ENCODE measurements at regions of chr7 and their contacts with region 1.

Region 1: GRCh38 chr7:74206589-74207120 is 3.2 kb upstream of the LAT2 start:
- DNase-seq: peak; percentile 57
- ATAC-seq: peak; percentile 90
- H3K4me3 ChIP-seq: no peak overlapping the region
- H3K27ac ChIP-seq: no peak overlapping the region
- H3K4me1 ChIP-seq: peaks cover 4% of the 10 kb centered on the region; the same call in 1 of the 2 replicates
- H3K27me3 ChIP-seq: no peaks in the 10 kb centered on the region
- CTCF ChIP-seq: peak; percentile 91
- POLR2A ChIP-seq: peak; percentile 46; the same call in 1 of the 2 replicates
- RAD21 ChIP-seq: peak; percentile 93

Region 2: DNA sequence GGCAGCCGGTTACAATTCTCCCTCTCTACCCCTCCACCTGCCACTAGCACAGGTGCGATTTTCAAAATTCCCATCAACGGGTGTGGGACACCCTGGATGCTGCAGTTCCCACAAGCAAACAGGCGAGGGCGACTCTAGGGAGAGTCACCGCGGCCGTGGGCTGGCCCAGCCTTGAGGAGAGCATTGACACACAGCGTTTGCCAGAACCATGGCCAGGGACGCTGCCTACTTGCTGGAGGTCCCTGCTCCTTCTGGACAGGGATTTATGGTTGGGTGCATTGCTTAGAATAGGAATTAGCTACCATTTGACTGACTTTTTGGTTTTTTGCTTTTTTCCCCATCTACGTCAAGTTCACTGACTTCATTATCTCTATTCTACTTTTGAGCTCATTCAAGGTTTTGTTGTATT is 394.9 kb before region 1 on chr7:
- CTCF ChIA-PET with region 1: no interaction called
- POLR2A ChIA-PET with region 1: no interaction called
- dilution Hi-C with region 1: no loop called
- in situ Hi-C with region 1: no loop called
- intact Hi-C with region 1: no loop called
- DNase-seq: peak; percentile 41
- ATAC-seq: peak; percentile 93
- H3K4me3 ChIP-seq: no peak overlapping the region
- H3K27ac ChIP-seq: no peak overlapping the region
- H3K4me1 ChIP-seq: 0 out of 2 replicates have a peak, but pooled peaks cover 2% of the 10 kb centered on the region
- H3K27me3 ChIP-seq: no peaks in the 10 kb centered on the region
- CTCF ChIP-seq: peak; percentile 71
- POLR2A ChIP-seq: no peak
- RAD21 ChIP-seq: peak; percentile 81

Region 3: GRCh38 chr7:74068393-74069085 is 138.1 kb before region 1 on chr7:
- CTCF ChIA-PET with region 1: interaction called, 5 read pairs
- POLR2A ChIA-PET with region 1: no interaction called
- dilution Hi-C with region 1: no loop called
- in situ Hi-C with region 1: no loop called
- intact Hi-C with region 1: loop called (anchors 1 kb)
- DNase-seq: no peak
- ATAC-seq: no peak
- H3K4me3 ChIP-seq: no peak overlapping the region
- H3K27ac ChIP-seq: no peak overlapping the region
- H3K4me1 ChIP-seq: no peaks in the 10 kb centered on the region
- H3K27me3 ChIP-seq: no peaks in the 10 kb centered on the region
- CTCF ChIP-seq: no peak
- POLR2A ChIP-seq: no peak
- RAD21 ChIP-seq: no peak

Region 4: DNA sequence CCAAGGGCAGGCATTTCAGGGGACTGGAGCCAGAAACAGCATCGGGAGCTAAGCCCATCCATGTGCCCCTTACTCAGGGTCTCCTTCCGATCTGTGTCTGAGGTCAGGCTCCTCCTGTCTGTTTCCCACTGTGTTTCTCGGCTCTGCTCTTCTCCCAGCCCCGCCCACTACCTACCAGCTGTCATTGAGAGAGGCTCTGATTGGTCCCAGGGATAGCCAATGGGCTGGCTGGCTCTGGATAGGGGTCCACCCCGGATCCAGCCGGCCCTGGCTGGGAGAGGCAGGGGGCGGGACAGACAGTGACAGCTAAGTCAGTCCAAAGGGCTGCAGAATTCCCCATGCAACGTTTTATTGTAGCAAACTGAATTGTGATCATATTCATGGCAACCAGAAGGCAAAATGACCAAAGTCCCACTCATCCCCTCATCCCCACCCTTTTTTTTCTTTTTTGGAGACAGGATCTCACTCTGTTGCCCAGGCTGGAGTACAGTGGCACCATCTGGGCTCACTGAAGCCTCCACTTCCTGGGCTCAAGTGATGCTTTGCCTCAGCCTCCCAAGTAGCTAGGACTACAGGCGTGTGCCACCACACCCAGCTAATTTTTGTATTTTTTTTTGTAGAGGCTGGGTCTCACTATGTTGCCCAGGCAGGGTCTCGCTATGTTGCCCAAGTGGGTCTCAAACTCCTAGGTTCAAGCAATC is 158.8 kb after region 1 on chr7:
- CTCF ChIA-PET with region 1: interaction called, 6 read pairs
- POLR2A ChIA-PET with region 1: interaction called, 10 read pairs
- dilution Hi-C with region 1: no loop called
- in situ Hi-C with region 1: no loop called
- intact Hi-C with region 1: no loop called
- DNase-seq: peak; percentile 43
- ATAC-seq: peak; percentile 98
- H3K4me3 ChIP-seq: no peak overlapping the region
- H3K27ac ChIP-seq: no peak overlapping the region
- H3K4me1 ChIP-seq: no peaks in the 10 kb centered on the region
- H3K27me3 ChIP-seq: no peaks in the 10 kb centered on the region
- CTCF ChIP-seq: no peak
- POLR2A ChIP-seq: no peak
- RAD21 ChIP-seq: no peak

Region 5: DNA sequence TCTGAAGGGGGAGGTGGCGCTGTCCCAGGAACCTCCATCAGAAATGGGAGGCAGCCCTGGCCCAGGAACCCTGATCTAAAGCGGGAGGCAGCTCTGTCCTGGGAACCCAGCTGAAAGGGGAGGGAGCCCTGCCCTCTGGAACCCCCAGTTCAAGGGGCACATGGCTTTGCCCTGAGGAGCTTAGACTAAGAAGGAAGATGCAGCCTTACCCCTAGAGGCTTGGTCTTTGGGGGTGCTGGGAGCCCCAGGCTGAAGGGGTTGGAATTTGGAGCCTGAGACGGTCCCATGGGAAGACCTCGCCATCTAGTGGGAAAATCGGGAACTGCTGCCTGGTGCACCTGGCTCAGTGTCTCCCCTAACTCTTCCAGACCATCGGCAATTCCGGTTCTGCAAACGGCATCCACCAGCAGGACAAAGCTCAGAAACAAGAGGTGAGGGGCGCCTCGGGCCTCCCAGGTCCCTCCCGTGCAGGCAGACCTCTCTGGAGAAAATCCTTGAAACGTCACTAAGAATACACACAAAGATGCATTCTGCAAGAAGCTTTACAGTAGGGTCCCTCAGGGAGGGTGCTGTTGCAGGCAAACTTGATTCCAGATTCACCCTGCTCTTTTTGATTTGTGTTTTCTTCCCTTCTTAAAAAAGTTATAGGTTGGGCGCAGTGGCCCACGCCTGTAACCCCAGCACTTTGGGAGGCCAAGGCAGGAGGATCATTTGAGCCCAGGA is 194.6 kb after region 1 on chr7:
- CTCF ChIA-PET with region 1: interaction called, 20 read pairs
- POLR2A ChIA-PET with region 1: interaction called, 4 read pairs
- dilution Hi-C with region 1: no loop called
- in situ Hi-C with region 1: loop called (anchors 5 kb)
- intact Hi-C with region 1: loop called (anchors 1 kb)
- DNase-seq: peak; percentile 41
- ATAC-seq: peak; percentile 91
- H3K4me3 ChIP-seq: no peak overlapping the region
- H3K27ac ChIP-seq: no peak overlapping the region
- H3K4me1 ChIP-seq: no peaks in the 10 kb centered on the region
- H3K27me3 ChIP-seq: no peaks in the 10 kb centered on the region
- CTCF ChIP-seq: peak; percentile 88
- POLR2A ChIP-seq: no peak
- RAD21 ChIP-seq: peak; percentile 88

Region 6: DNA sequence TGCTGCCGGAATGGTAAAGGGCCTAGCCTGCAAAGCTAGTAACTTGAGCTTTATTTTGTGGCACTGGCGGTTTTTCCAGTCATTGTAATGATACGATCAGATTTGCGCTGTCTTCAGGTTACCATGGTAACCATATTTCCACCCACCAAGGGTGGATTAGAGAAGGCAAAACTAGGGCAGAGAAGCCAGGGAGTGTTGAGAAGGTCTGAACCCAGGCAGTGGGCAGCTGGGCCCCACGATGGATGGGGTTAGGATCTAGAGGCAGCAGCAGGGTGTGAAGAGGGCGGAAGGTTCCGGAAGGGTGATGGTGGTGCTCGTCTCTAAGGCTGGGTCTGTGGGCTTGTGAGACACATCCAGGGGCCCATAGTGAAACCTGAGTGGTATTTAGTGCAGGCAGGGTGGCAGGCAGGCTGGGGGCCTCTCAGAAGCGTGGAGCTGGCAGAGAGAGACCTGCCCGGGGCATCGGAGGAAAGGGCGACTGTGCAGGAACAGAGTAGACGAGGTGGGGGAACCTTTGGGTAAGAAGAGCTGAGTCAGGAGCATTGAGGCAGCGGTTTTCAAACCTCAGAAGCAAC is 362.9 kb after region 1 on chr7:
- CTCF ChIA-PET with region 1: no interaction called
- POLR2A ChIA-PET with region 1: no interaction called
- dilution Hi-C with region 1: no loop called
- in situ Hi-C with region 1: loop called (anchors 25 kb)
- intact Hi-C with region 1: no loop called
- DNase-seq: no peak
- ATAC-seq: no peak
- H3K4me3 ChIP-seq: no peak overlapping the region
- H3K27ac ChIP-seq: no peak overlapping the region
- H3K4me1 ChIP-seq: no peaks in the 10 kb centered on the region
- H3K27me3 ChIP-seq: no peaks in the 10 kb centered on the region
- CTCF ChIP-seq: no peak
- POLR2A ChIP-seq: no peak
- RAD21 ChIP-seq: no peak

Measured in IMR-90 (cell line).